ENCODE measurements at regions of chr13 and their contacts with region 1.

Region 1: DNA sequence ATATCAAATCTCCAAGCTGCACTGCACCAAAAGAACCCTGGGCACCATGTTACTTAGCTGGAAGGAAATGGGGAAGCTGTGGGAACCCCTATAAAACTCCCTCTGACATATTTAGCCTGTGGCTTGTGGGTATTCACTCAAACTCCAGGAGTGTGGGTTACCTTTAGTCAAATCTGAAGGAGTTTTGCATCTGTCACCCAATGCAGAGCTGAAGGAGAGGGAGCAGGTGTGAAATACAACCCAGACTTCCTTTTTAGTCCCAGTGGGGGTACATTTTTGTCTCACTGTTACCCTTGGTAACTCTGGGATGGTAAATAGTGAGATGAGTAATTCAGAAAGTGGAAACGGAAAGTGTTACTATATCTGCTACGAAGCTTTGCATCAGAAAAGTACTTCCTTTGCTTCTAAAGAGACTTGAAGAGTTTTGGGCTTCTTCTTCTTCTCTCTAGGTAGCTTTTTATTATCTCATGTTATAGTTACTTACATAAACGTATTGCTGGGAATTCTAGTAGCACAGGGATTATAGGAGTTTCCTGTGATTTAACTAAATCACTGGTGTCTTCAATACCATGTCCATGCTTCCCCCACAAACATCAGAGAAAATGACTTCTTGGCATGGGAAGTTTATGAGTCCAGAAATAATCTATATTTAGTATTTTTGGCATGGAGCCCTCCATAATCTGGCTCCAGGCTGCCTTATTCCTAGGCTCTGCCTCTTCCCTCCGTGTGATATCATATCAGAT is 105.9 kb downstream of the AKAP11 start:
- DNase-seq: no peak
- ATAC-seq: peak; percentile 74
- H3K4me3 Mint-ChIP-seq: peak overlapping the region; percentile 60
- H3K27ac Mint-ChIP-seq: peak overlapping the region; percentile 91
- H3K4me1 Mint-ChIP-seq: peaks cover 54% of the 10 kb centered on the region
- H3K27me3 Mint-ChIP-seq: no peaks in the 10 kb centered on the region
- CTCF ChIP-seq: no peak

Region 2: GRCh38 chr13:42039946-42040729 is 337.7 kb before region 1 on chr13:
- CTCF ChIA-PET with region 1: no interaction called
- POLR2A ChIA-PET with region 1: no interaction called
- intact Hi-C with region 1: loop called (anchors 1 kb)
- DNase-seq: peak; percentile 78
- ATAC-seq: peak; percentile 82
- H3K4me3 Mint-ChIP-seq: peak overlapping the region; percentile 90
- H3K27ac Mint-ChIP-seq: peak overlapping the region; percentile 84
- H3K4me1 Mint-ChIP-seq: peaks cover 16% of the 10 kb centered on the region
- H3K27me3 Mint-ChIP-seq: peaks cover 6% of the 10 kb centered on the region
- CTCF ChIP-seq: no peak

Region 3: DNA sequence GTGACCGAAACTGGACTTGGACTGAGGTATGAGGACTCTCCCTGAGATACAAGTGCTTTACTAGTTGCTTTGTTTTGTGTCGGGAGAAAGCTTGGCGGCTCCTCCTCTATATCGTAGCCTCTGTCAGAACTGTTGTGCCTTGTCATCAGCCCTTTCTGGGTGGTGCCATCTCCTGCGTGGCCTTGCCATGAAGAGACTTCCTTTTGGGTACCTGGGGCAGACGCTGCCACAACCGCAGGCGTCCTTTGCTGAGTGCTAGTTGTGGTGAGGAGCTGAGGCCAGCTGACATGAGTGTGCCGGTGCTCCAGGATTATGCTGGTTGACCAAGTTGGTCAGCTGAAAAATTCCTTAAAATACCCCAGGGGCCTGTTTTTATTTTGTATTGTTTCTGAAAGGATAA is 18.7 kb after region 1 on chr13:
- CTCF ChIA-PET with region 1: no interaction called
- POLR2A ChIA-PET with region 1: interaction called, 7 read pairs
- intact Hi-C with region 1: loop called (anchors 1 kb)
- DNase-seq: no peak
- ATAC-seq: peak; percentile 83
- H3K4me3 Mint-ChIP-seq: peak overlapping the region; percentile 39
- H3K27ac Mint-ChIP-seq: peak overlapping the region; percentile 64
- H3K4me1 Mint-ChIP-seq: peaks cover 26% of the 10 kb centered on the region
- H3K27me3 Mint-ChIP-seq: no peaks in the 10 kb centered on the region
- CTCF ChIP-seq: no peak

Region 4: DNA sequence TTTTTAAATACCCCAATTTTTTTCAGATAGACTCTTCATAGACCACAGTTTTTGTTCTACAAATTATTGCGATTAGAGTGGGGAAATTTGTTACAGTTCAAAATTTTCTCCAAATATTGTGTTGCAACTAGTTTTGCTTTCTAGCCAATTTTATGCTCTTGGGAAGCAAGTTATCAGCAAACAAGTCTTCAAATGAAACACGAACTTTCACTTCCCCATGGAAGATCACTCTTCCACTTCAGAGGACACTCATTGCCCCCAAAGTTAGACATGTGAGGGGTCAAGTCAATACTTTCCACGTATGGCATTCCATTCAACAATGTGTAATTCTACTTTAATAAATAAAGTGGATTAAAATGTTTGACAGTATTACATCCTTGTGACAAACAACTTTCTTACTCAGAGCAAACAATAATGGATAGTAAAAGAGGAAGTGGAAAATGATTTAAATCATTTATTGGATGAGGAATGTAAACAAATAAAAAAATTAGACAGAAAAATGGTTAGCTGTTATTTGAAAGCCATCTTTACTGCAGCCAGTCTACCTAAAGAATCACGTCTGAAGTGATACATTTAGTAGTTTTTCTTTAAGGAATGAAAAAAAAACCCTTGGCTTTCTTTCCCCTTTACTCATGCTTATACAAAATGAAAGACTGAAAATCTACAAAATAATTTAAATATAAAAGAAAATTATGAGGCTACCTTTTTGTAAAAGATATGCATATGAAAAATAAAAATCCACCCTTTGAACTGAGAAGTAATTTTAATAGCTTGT is 154.9 kb after region 1 on chr13:
- CTCF ChIA-PET with region 1: no interaction called
- POLR2A ChIA-PET with region 1: interaction called, 3 read pairs
- intact Hi-C with region 1: loop called (anchors 2 kb)
- DNase-seq: no peak
- ATAC-seq: peak; percentile 76
- H3K4me3 Mint-ChIP-seq: peak overlapping the region; percentile 19
- H3K27ac Mint-ChIP-seq: peak overlapping the region; percentile 30
- H3K4me1 Mint-ChIP-seq: peaks cover 33% of the 10 kb centered on the region
- H3K27me3 Mint-ChIP-seq: no peaks in the 10 kb centered on the region
- CTCF ChIP-seq: no peak

Region 5: DNA sequence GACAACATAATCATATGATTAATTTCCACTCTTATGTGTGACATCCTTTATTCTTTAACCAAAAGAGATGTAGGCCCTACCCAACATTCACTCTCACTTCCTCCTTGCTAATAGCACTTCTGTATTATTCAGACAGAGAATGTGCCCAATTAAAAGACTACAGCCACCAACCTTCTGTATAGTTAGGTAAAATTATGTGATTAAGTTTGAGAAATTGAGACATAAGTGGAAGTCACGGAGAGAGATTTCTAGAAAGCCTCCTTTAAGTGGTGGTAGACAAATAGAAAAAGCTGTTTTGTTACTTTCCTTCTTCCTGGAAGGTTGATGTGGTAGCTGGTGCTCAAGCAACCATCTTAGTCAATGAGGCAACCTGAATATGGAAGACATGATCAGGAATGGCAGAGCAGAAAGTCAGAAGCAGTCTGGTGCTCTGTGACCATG is 599.4 kb after region 1 on chr13:
- CTCF ChIA-PET with region 1: no interaction called
- POLR2A ChIA-PET with region 1: no interaction called
- intact Hi-C with region 1: loop called (anchors 2 kb)
- DNase-seq: no peak
- ATAC-seq: peak; percentile 97
- H3K4me3 Mint-ChIP-seq: peak overlapping the region; percentile 7
- H3K27ac Mint-ChIP-seq: peak overlapping the region; percentile 42
- H3K4me1 Mint-ChIP-seq: peaks cover 25% of the 10 kb centered on the region
- H3K27me3 Mint-ChIP-seq: no peaks in the 10 kb centered on the region
- CTCF ChIP-seq: no peak

Measured in activated B cell treated with CpG ODN at 0.5 μM for 24 hours (primary cell).